ENCODE measurements at regions of chr9 and their contacts with region 1.

Region 1: GRCh38 chr9:122350638-122351355 is 20.0 kb upstream of the PTGS1 start:
- DNase-seq: peak; percentile 82
- H3K4me3 ChIP-seq: no peak overlapping the region
- H3K27ac ChIP-seq: no peak overlapping the region
- H3K4me1 ChIP-seq: peaks cover 4% of the 10 kb centered on the region
- H3K27me3 ChIP-seq: no peaks in the 10 kb centered on the region
- CTCF ChIP-seq: peak; percentile 93 to 95 (median 93)
- POLR2A ChIP-seq: no peak

Region 2: GRCh38 chr9:122125158-122125508 is 225.7 kb before region 1 on chr9:
- intact Hi-C with region 1: loop called (anchors 5 kb)
- DNase-seq: peak; percentile 85
- H3K4me3 ChIP-seq: no peak overlapping the region
- H3K27ac ChIP-seq: no peak overlapping the region
- H3K4me1 ChIP-seq: peaks cover 7% of the 10 kb centered on the region
- H3K27me3 ChIP-seq: no peaks in the 10 kb centered on the region
- CTCF ChIP-seq: peak; percentile 86 to 87 (median 86)
- POLR2A ChIP-seq: no peak

Region 3: DNA sequence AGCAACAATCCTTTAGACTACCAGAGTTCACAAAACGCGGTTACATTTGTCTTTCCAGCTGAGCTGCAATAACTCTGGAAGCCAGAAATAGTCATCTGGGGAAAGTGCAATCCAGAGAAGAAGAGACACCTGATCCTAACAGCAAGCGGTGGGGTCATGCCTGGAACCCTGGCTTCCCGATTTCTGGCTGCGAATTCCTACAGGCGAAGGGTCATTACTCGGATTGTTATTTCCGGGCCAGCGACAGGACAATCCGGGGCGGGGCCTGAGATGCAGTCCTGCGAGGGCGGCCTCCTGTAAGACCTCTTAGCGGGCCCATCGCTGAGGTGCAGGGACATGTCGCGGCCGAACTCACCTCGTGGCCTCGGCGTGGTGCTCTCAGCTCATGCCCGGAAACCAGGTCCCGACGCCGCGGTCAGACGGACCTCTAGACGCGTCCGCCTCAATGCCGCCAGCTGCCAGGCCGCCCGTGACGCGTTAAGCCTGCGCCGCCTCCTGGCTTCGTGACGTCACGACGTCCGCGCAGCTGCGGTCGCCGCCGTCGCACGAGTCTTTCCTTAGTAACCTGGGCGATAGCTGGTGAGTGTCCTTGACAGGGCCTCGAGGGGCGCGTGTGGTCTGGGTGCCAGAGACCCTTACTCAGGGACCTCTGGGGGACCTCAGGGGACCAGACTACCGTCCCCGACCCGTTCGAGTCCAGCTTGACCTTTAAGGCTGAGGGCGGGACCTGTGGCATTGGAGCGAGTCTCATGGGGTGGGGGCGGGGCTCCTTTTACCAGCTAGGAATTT is 86.2 kb before region 1 on chr9 and contains the starts of genes MRRF and RBM18:
- intact Hi-C with region 1: no loop called
- DNase-seq: peak; percentile 93
- H3K4me3 ChIP-seq: peak within 1 kb of the TSS; percentile 87
- H3K27ac ChIP-seq: peak within 1 kb of the TSS; percentile 88 to 91
- H3K4me1 ChIP-seq: peaks cover 9% of the 10 kb centered on the region
- H3K27me3 ChIP-seq: no peaks in the 10 kb centered on the region
- CTCF ChIP-seq: peak in 1 of 3 experiments; percentile 18
- POLR2A ChIP-seq: peak; percentile 42
- total RNA-seq, gene MRRF: 45.5 to 54.1 TPM
- total RNA-seq, gene RBM18: 10.0 to 11.8 TPM